Ascending aorta (tissue), 2 donors: ENCODE measurements at regions of chr5 and their contacts with region 1.

Region 1: GRCh38 chr5:55534436-55535198 is at the start of gene PLPP1:
- DNase-seq: peak; percentile 70 to 95
- H3K4me3 ChIP-seq: peak within 1 kb of the TSS; percentile 87 to 91
- H3K27ac ChIP-seq: peak within 1 kb of the TSS; percentile 97 to 99
- H3K4me1 ChIP-seq: peaks cover 0 to 12% of the 10 kb centered on the region in 2 donors
- H3K27me3 ChIP-seq: no peaks in the 10 kb centered on the region
- CTCF ChIP-seq: peak in 1 of 3 experiments; percentile 19
- total RNA-seq, gene PLPP1: 1,314 TPM

Region 2: DNA sequence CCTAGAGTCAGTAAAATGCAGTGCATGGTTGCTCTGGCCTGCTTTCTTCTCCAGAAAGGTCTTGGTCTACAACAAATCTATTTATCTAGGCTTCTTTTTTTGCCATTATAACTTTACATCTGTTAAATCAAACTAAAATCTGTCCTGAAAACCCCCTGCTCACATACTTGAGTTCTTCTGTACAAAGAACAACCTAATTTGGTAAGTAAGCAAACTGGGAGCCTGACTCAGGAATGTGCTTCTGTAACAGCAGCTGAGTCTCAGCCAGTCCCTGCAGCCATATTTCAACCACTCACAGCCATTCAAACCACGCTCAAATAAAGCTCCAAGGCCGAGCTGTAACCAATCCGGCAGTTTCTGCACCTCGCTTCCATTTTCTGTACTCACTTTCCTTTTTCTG is 95.6 kb before region 1 on chr5:
- intact Hi-C with region 1: loop called (anchors 1 kb)
- DNase-seq: peak in 1 of 2 donors; percentile 77
- H3K4me3 ChIP-seq: no peak overlapping the region
- H3K27ac ChIP-seq: peak overlapping the region; percentile 87 to 92
- H3K4me1 ChIP-seq: peaks cover 14 to 36% of the 10 kb centered on the region in 2 donors
- H3K27me3 ChIP-seq: no peaks in the 10 kb centered on the region
- CTCF ChIP-seq: no peak

Region 3: DNA sequence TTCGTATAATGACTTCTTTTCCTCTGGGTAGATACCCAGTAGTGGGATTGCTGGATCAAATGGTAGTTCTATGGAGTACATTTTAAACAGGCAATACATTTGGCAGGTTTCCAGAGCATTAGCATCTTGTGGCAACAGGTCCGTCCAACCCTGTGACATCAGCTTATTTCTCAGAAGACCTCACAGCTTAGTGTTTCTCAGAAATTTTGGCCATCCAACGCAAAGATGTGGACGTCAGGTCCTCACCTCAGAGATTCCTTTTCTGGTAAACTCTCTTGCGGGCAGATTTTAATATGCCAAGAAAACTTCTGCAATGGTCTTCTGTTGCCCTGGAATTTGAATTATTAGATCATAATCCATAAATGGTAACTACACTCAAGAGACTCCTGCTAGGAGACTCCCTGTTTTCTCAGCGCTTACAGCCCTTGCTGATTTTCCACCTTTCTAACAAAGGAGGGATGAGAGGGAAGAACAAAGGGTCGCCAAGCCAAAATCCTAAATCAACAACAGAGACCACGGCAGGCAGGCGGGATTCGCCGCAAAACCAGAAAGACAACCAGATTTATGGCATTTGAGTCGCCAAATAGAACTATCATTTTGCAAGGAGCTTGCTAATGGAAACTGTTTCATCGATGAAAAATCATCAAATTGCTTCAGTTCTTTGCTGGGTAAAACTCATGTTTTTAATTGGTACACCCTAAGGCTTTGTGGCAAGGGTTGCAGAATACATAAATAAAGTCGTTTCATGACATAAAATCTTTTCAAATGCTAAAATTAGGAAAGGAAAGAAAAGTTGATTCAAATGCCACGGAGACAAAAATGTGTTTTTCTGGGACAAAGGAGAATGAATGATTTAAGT is 34.3 kb after region 1 on chr5:
- intact Hi-C with region 1: loop called (anchors 1 kb)
- DNase-seq: peak in 1 of 2 donors; percentile 82
- H3K4me3 ChIP-seq: peak overlapping the region in 1 of 2 donors; percentile 50
- H3K27ac ChIP-seq: peak overlapping the region; percentile 84 to 93
- H3K4me1 ChIP-seq: peaks cover 0 to 19% of the 10 kb centered on the region in 2 donors
- H3K27me3 ChIP-seq: no peaks in the 10 kb centered on the region
- CTCF ChIP-seq: no peak